GM10248 (cell line): ENCODE measurements at regions of chr1 and their contacts with region 1.

Region 1: DNA sequence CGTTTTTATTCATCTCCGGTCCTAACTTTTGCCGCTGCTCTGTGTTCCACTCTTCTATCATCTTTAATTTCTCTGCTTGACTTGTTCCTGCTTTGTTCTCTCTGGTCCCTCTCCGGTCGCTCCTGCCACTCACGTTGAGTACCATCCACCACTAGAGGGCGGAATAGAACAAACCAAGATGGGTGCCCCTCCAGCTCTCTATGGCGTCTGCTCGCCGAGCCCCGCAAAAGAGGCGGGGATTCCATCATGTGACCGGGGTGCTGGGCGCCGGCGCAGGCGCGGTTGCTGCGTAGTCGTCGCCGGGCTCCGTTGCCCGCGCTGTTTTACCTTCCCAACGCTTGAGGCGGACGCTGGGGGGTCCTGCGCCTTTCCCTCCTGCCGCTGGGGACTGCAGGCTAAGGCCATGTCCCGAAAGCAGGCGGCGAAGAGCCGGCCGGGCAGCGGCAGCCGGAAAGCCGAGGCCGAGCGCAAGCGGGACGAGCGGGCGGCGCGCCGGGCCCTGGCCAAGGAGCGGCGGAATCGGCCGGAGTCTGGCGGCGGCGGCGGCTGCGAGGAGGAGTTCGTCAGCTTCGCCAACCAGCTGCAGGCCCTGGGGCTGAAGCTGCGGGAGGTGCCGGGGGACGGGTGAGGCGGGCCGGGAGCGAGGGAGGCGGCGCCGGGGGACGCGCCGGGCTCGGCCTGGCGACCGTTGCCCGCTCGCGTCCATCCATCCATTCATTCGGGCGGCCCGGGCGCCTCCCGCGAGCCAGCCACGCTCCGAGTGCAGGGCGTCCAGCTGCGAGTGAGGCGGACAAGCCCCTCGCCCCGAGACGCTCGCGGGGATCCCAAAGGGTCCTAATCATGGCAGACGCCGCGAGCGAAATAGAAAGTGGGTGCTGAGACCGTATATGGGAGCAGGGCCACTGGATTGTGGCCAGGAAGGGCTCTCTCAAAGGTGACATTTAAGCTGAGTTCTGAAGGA is at the start of gene OTUD3:
- DNase-seq: peak; percentile 98
- CTCF ChIP-seq: peak; percentile 92

Region 2: GRCh38 chr1:19850218-19850617 is 32.2 kb before region 1 on chr1:
- CTCF ChIA-PET with region 1: interaction called, 10 read pairs
- POLR2A ChIA-PET with region 1: no interaction called
- DNase-seq: no peak
- CTCF ChIP-seq: no peak

Region 3: DNA sequence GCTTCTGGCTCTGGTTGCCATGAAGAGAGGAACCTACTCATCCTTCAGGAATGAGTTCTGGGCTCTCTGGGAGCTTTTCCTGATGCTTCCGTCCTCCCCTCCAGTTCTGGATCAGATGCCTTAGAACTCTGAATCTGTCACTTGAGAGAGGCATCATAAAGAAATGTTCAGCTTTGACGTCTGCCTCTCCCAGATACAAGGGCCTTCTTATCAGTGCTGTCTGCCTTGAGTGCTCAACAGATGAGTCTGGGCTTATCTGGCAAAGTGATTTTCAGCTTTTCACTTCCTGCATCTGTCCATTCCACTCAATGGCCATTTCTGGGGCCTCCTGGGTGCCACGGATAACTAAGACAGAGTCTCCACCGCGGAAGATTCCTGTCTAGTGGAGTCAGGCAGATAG is 12.5 kb before region 1 on chr1:
- CTCF ChIA-PET with region 1: interaction called, 15 read pairs
- POLR2A ChIA-PET with region 1: no interaction called
- DNase-seq: no peak
- CTCF ChIP-seq: no peak

Region 4: DNA sequence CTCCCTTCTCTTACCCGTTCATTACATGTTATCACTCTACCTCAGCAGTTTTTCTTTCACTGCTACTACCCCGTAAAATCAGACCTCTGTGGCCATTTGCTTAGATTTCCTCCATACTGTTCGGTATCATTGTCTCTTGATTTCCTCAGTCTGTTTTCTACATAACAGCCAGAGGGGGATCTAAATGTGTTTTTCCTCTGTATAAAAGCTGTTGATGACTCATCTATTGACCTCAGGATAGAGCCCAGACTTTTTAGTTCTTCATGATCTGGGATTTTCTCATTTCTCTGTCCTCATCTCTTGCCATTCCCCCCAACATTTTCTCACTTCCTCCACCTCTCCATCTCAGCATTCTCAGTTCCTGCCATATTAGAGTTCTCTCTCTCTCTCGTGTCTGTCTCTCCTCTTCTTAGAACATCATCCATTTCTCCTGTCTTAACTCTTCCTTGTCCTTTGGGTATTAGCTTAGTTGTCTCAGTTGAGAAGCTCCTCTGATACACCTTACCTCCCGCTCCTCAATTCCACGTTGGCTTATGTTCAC is 10.3 kb after region 1 on chr1:
- CTCF ChIA-PET with region 1: interaction called, 42 read pairs
- POLR2A ChIA-PET with region 1: no interaction called
- DNase-seq: no peak
- CTCF ChIP-seq: no peak

Region 5: GRCh38 chr1:20017741-20018140 is 135.3 kb after region 1 on chr1:
- CTCF ChIA-PET with region 1: no interaction called
- POLR2A ChIA-PET with region 1: no interaction called
- DNase-seq: no peak
- CTCF ChIP-seq: no peak